Transverse colon (tissue), 4 donors: ENCODE measurements at regions of chr17 and their contacts with region 1.

Region 1: DNA sequence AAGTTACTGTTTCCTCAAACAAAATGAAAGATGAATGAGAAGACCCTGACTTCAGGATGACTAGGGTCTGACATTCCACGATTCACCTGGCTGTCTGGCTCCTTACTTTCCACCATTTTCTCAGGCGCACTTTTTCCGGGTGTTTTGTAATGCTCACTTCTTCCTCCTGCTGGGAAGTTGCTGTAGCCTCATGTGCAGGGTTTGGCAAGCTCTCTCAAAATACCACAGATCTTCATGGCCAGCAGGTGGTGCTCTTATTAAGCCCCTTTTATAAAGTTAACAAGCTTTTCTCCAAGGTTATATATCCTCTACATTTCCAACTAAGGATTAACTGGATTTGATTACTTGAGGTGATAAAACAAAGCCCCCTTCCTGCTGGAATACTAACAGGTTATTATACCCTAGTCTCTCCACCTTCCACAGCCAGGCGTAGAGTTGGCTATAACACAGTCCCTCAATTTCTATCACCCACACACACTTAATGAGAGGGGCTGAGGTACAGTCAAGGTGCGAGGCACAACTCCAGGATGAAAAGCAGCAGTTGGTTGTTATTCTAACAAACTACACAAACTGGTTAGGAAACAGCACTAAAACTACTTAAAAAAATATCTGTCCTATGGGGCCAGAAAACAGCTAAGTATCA is 45.4 kb downstream of the STH start:
- DNase-seq: peak; percentile 81
- H3K4me3 ChIP-seq: no peak overlapping the region
- H3K27ac ChIP-seq: peak overlapping the region; percentile 56 to 74 (median 65)
- H3K4me1 ChIP-seq: peaks cover 0 to 46% (median 34%) of the 10 kb centered on the region in 4 donors
- H3K27me3 ChIP-seq: no peaks in the 10 kb centered on the region
- CTCF ChIP-seq: peak; percentile 71 to 94 (median 79)
- EP300 ChIP-seq: no peak
- POLR2A ChIP-seq: no peak

Region 2: DNA sequence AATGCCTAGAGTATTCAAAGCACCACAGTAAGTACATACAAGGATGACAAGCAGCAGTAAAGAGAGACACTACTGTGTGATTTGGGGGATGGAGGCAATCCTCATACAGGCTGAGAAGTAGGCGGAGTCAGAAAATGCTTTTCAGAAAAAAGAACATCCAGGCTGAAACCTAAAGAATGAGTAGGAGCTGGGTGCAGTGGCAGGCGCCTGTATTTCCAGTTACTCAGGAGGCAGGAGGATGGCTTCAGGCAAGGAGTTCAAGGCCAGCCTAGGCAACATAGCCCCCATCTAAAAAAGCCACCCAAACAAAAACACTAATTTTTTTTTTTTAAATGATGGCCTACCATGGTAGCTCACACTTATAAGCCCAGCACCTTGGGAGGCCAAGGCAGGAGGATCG is 138.6 kb after region 1 on chr17:
- in situ Hi-C with region 1: loop called in 2 of 4 experiments (anchors 5 to 10 kb)
- intact Hi-C with region 1: no loop called
- DNase-seq: no peak
- H3K4me3 ChIP-seq: no peak overlapping the region
- H3K27ac ChIP-seq: no peak overlapping the region
- H3K4me1 ChIP-seq: peaks cover 31 to 92% (median 54%) of the 10 kb centered on the region in 4 donors
- H3K27me3 ChIP-seq: no peaks in the 10 kb centered on the region
- CTCF ChIP-seq: no peak
- EP300 ChIP-seq: no peak
- POLR2A ChIP-seq: no peak

Region 3: DNA sequence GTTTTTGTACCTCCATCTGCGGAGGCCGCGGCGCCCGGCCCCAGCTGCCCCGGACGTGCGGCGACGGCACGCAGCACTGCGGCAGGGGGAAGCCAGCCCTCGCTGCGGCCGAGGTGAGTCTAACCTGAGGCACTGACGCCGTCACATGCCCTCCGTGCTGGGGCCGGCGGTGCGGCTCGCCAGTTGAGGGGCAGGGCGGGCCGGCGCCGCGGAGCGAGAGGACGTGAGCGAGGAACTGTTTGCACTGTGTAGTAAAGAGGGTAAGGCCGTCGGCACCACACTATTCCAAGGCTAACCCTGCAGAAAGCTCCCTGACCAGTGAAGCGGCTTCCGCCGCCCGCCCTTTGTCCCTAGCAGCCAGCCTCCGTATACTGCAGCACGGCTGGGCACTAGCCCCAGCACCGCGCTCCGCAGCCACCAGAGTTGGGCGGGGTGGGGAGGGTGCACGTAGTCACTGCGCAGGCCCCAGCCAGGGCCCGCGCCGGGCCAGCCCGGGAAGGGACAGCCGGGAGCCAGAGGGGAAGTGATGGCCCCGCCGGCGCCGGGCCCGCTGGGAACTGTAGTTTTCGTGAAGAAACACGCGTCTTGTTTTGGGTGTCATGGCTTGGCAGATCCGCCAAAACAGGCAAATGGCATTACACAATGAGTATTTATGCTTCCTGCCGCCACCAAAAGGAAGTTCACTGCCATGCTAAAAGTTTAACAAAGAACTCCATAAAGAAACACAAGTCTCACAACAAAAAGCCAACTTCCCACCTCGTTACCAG is 149.4 kb after region 1 on chr17:
- in situ Hi-C with region 1: loop called in 2 of 4 experiments (anchors 5 to 10 kb)
- intact Hi-C with region 1: loop called (anchors 5 kb)
- DNase-seq: peak; percentile 96
- H3K4me3 ChIP-seq: peak overlapping the region; percentile 83 to 100 (median 98)
- H3K27ac ChIP-seq: peak overlapping the region; percentile 100
- H3K4me1 ChIP-seq: peaks cover 27 to 51% (median 38%) of the 10 kb centered on the region in 4 donors
- H3K27me3 ChIP-seq: no peaks in the 10 kb centered on the region
- CTCF ChIP-seq: peak in 4 of 5 experiments; percentile 4 to 72 (median 25)
- EP300 ChIP-seq: no peak
- POLR2A ChIP-seq: peak; percentile 90